ENCODE measurements at regions of chr4 and their contacts with region 1.

Region 1: GRCh38 chr4:159117968-159118367 is 15.1 kb downstream of the RAPGEF2 start:
- DNase-seq: no peak
- H3K4me3 ChIP-seq: no peak overlapping the region
- H3K27ac ChIP-seq: no peak overlapping the region
- H3K4me1 ChIP-seq: no peaks in the 10 kb centered on the region
- H3K27me3 ChIP-seq: no peaks in the 10 kb centered on the region
- CTCF ChIP-seq: no peak

Region 2: DNA sequence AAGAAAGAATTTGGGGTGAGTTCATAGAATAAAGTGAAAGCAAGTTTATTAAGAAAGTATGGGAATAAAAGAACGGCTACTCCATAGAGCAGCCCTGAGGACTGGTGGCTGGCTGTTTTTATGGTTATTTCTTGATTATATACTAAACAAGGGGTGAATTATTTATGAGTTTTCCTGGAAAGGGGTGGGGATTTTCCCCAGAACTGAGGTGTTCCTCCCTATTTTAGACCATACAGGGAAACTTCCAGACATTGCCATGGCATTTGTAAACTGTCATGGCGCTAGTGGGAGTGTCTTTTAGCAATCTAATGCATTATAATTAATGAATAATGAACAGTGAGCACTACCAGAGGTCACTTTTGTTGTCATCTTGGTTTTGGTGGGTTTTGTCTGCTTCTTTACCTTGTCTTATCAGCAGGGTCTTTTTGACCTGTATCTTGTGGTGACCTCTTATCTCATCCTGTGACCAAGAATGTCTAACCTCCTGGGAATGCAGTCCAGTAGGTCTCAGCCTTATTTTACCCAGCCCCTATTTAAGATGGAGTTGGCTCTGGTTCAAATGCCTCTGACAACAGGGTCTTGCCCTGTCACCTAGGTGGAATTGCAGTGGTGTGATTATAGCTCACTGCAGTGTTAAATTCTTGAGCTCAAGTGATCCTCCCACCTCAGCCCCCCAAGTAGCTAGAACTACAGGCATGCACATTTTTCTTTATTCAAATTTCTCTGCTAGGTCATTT is 12.0 kb after region 1 on chr4:
- CTCF ChIA-PET with region 1: no interaction called
- POLR2A ChIA-PET with region 1: interaction called, 11 read pairs
- intact Hi-C with region 1: no loop called
- DNase-seq: peak; percentile 9 to 45
- H3K4me3 ChIP-seq: no peak overlapping the region
- H3K27ac ChIP-seq: 0 out of 2 replicates have a peak overlapping the region, but pooled peaks have one; percentile 12
- H3K4me1 ChIP-seq: peaks cover 14% of the 10 kb centered on the region
- H3K27me3 ChIP-seq: no peaks in the 10 kb centered on the region
- CTCF ChIP-seq: no peak

Region 3: GRCh38 chr4:159160242-159160641 is 42.3 kb after region 1 on chr4:
- CTCF ChIA-PET with region 1: no interaction called
- POLR2A ChIA-PET with region 1: no interaction called
- intact Hi-C with region 1: loop called (anchors 5 kb)
- DNase-seq: no peak
- H3K4me3 ChIP-seq: no peak overlapping the region
- H3K27ac ChIP-seq: no peak overlapping the region
- H3K4me1 ChIP-seq: no peaks in the 10 kb centered on the region
- H3K27me3 ChIP-seq: no peaks in the 10 kb centered on the region
- CTCF ChIP-seq: no peak